CD4-positive, alpha-beta memory T cell (primary cell): ENCODE measurements at regions of chr5 and their contacts with region 1.

Region 1: DNA sequence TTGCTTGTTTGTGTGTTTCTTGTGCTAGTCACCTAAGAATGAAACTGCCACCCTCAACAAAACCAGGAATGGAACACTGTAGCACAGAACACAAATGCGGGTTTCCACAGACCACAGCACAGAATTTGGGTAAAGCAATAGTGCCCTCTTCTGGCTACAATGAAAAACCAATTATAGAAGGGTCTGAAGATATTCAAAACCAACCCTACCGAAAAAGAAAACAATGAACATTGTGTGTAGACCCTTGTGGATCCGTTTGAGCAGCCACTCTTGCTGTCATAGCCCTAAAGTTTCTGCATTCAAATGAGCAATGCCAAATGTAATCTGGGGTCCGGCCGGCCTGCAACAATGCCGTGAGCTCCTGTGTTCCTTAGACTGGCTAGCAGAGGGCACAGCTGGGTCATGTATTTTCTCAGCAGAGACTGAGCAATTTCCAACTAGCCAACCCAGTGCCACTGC is 8.3 kb upstream of the ENC1 start:
- DNase-seq: peak in 4 of 5 donors; percentile 54 to 59 (median 58)
- H3K4me3 ChIP-seq: no peak overlapping the region
- H3K4me3 Mint-ChIP-seq: no peak overlapping the region
- H3K27ac ChIP-seq: no peak overlapping the region
- H3K27ac Mint-ChIP-seq: no peak overlapping the region
- H3K4me1 ChIP-seq: no peaks in the 10 kb centered on the region
- H3K4me1 Mint-ChIP-seq: peaks cover 0 to 3% (median 1%) of the 10 kb centered on the region in 4 donors
- H3K27me3 ChIP-seq: no peaks in the 10 kb centered on the region
- H3K27me3 Mint-ChIP-seq: peaks cover 2 to 3% of the 10 kb centered on the region in 2 donors

Region 2: DNA sequence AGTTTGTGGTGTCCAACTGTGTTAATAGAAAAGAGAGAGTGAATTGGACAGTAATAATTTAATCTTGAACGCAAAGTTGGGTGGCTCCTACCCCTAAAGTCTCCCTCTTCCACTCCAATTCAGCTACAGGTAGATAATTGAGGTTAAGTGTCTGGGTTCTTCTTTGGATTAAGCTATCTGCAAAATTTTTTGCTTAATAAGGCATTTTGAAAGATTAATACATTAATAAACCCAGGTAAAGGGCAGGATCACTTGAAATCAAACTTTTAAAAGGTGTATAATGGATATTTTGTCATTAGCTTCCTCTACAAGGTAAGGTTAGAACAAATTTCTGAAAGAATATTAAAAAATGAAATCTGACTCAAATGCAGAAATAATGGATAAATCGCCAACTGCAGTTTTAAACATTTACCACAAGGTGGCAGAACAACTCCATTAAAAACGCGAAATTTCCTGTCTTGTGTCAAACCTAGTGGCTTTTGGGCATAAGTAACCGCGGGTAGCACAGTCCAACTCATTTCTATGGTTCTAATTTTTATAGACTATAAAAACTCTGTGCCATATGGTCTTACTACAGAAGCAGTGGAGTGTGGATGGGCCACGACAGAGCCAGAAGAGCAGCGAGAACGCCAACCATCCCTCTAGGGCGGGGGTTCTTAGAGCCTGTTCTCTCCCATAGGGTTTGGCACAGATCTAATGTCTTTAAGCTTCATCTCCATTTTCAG is 746.4 kb before region 1 on chr5:
- CTCF ChIA-PET with region 1: interaction called, 105 read pairs
- POLR2A ChIA-PET with region 1: no interaction called
- intact Hi-C with region 1: loop called (anchors 1 kb)
- DNase-seq: peak in 4 of 5 donors; percentile 44 to 51 (median 48)
- H3K4me3 ChIP-seq: no peak overlapping the region
- H3K4me3 Mint-ChIP-seq: no peak overlapping the region
- H3K27ac ChIP-seq: no peak overlapping the region
- H3K27ac Mint-ChIP-seq: no peak overlapping the region
- H3K4me1 ChIP-seq: no peaks in the 10 kb centered on the region
- H3K4me1 Mint-ChIP-seq: no peaks in the 10 kb centered on the region
- H3K27me3 ChIP-seq: no peaks in the 10 kb centered on the region
- H3K27me3 Mint-ChIP-seq: peaks cover 15 to 28% of the 10 kb centered on the region in 2 donors

Region 3: DNA sequence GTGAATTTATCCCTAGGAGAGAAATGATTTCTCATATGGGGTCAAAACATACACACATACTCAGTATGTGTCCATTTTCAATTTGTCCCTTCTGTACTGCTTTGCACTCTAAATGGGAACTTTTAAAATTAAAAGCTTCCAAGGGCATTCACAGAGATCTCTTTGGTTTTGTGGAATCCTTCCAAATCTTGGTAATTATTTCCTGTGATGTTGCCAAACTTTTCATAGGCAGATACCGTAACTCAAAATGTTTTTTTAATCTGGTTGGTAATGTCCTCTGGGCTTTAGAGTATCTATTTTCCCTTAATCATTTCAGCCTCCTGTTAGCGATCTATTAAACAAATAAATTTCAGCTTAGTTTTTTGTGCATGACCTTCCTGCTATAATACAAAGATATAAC is 740.5 kb before region 1 on chr5:
- CTCF ChIA-PET with region 1: interaction called, 105 read pairs
- POLR2A ChIA-PET with region 1: no interaction called
- intact Hi-C with region 1: no loop called
- DNase-seq: no peak
- H3K4me3 ChIP-seq: no peak overlapping the region
- H3K4me3 Mint-ChIP-seq: no peak overlapping the region
- H3K27ac ChIP-seq: no peak overlapping the region
- H3K27ac Mint-ChIP-seq: no peak overlapping the region
- H3K4me1 ChIP-seq: no peaks in the 10 kb centered on the region
- H3K4me1 Mint-ChIP-seq: no peaks in the 10 kb centered on the region
- H3K27me3 ChIP-seq: no peaks in the 10 kb centered on the region
- H3K27me3 Mint-ChIP-seq: peaks cover 4 to 5% of the 10 kb centered on the region in 2 donors

Region 4: GRCh38 chr5:74660873-74661272 is 12.0 kb after region 1 on chr5:
- CTCF ChIA-PET with region 1: interaction called, 11 read pairs
- POLR2A ChIA-PET with region 1: no interaction called
- intact Hi-C with region 1: no loop called
- DNase-seq: no peak
- H3K4me3 ChIP-seq: no peak overlapping the region
- H3K4me3 Mint-ChIP-seq: no peak overlapping the region
- H3K27ac ChIP-seq: no peak overlapping the region
- H3K27ac Mint-ChIP-seq: no peak overlapping the region
- H3K4me1 ChIP-seq: no peaks in the 10 kb centered on the region
- H3K4me1 Mint-ChIP-seq: no peaks in the 10 kb centered on the region
- H3K27me3 ChIP-seq: no peaks in the 10 kb centered on the region
- H3K27me3 Mint-ChIP-seq: peaks cover 8 to 15% of the 10 kb centered on the region in 2 donors

Region 5: GRCh38 chr5:74736759-74737158 is 87.9 kb after region 1 on chr5:
- CTCF ChIA-PET with region 1: no interaction called
- POLR2A ChIA-PET with region 1: no interaction called
- intact Hi-C with region 1: no loop called
- DNase-seq: no peak
- H3K4me3 ChIP-seq: no peak overlapping the region
- H3K4me3 Mint-ChIP-seq: no peak overlapping the region
- H3K27ac ChIP-seq: no peak overlapping the region
- H3K27ac Mint-ChIP-seq: no peak overlapping the region
- H3K4me1 ChIP-seq: no peaks in the 10 kb centered on the region
- H3K4me1 Mint-ChIP-seq: no peaks in the 10 kb centered on the region
- H3K27me3 ChIP-seq: no peaks in the 10 kb centered on the region
- H3K27me3 Mint-ChIP-seq: no peaks in the 10 kb centered on the region